ENCODE measurements at regions of chr1 and their contacts with region 1.

Region 1: GRCh38 chr1:220272047-220272840 is at the start of gene RAB3GAP2:
- DNase-seq: peak; percentile 94
- ATAC-seq: peak; percentile 91
- H3K4me3 Mint-ChIP-seq: no peak within 1 kb of the TSS
- H3K27ac Mint-ChIP-seq: no peak within 1 kb of the TSS
- H3K4me1 Mint-ChIP-seq: peaks cover 16% of the 10 kb centered on the region
- H3K27me3 Mint-ChIP-seq: peaks cover 7% of the 10 kb centered on the region
- CTCF ChIP-seq: no peak
- total RNA-seq, gene RAB3GAP2: 93.3 and 107 TPM in 2 replicates

Region 2: GRCh38 chr1:218284934-218285635 is 1987.2 kb before region 1 on chr1 and contains the start of gene RRP15:
- CTCF ChIA-PET with region 1: no interaction called
- POLR2A ChIA-PET with region 1: no interaction called
- intact Hi-C with region 1: loop called (anchors 2 kb)
- DNase-seq: peak; percentile 85
- ATAC-seq: peak; percentile 99
- H3K4me3 Mint-ChIP-seq: peak within 1 kb of the TSS; percentile 96
- H3K27ac Mint-ChIP-seq: peak within 1 kb of the TSS; percentile 97
- H3K4me1 Mint-ChIP-seq: peaks cover 30% of the 10 kb centered on the region
- H3K27me3 Mint-ChIP-seq: peaks cover 9% of the 10 kb centered on the region
- CTCF ChIP-seq: no peak
- total RNA-seq, gene RRP15: 26.9 and 27.3 TPM in 2 replicates

Region 3: GRCh38 chr1:219130366-219130935 is 1141.8 kb before region 1 on chr1:
- CTCF ChIA-PET with region 1: no interaction called
- POLR2A ChIA-PET with region 1: no interaction called
- intact Hi-C with region 1: no loop called
- DNase-seq: no peak
- ATAC-seq: no peak
- H3K4me3 Mint-ChIP-seq: no peak overlapping the region
- H3K27ac Mint-ChIP-seq: no peak overlapping the region
- H3K4me1 Mint-ChIP-seq: no peaks in the 10 kb centered on the region
- H3K27me3 Mint-ChIP-seq: no peaks in the 10 kb centered on the region
- CTCF ChIP-seq: no peak

Region 4: DNA sequence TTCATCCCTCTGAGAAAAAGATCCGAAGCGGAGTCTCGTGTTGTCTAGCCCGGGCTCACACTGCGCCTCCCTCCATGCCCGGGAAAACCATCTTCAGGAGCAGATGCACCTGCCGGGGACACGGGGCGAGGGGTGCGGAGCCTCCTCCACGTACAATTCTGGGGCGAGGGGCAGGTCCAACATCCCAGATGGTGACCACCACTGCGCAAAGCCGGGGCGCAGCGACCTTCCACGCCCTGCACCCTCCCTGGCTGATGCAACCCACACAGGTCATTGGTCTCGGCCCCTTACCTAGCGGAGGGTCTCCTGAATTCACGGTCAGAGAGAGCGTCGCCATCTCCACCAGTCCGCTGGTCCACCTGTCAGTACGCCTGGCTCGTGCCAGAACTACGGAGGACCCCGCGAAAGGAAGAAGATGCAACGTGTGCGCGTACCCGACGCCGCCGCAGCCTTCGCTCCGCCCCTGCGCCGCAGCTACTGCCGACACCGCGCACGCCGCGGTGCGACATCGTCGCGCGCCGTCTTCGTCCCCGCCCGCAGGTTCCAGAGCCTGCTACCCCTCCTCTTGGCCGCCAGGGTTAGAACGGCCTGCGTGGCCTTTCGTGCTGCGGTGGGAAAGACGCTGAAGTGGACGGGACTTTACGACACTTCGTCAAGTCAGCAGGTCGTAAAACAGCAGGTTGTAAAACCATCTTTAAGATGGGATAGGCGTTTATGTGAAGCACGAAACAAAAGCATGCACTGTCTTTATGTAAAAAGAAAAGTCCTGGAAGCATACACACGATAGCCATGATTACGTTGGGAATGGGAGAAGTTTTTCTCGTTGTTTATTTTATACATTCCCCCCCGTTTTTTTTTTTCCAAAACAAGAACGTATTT is 226.0 kb before region 1 on chr1 and contains the start of gene EPRS1:
- CTCF ChIA-PET with region 1: no interaction called
- POLR2A ChIA-PET with region 1: no interaction called
- intact Hi-C with region 1: loop called (anchors 2 kb)
- DNase-seq: peak; percentile 89
- ATAC-seq: peak; percentile 99
- H3K4me3 Mint-ChIP-seq: peak within 1 kb of the TSS; percentile 97
- H3K27ac Mint-ChIP-seq: peak within 1 kb of the TSS; percentile 93
- H3K4me1 Mint-ChIP-seq: peaks cover 26% of the 10 kb centered on the region
- H3K27me3 Mint-ChIP-seq: no peaks in the 10 kb centered on the region
- CTCF ChIP-seq: peak; percentile 21
- total RNA-seq, gene EPRS1: 114 and 119 TPM in 2 replicates

Region 5: GRCh38 chr1:220255204-220255603 is 17.0 kb before region 1 on chr1:
- CTCF ChIA-PET with region 1: no interaction called
- POLR2A ChIA-PET with region 1: interaction called, 8 read pairs
- intact Hi-C with region 1: loop called (anchors 2 kb)
- DNase-seq: no peak
- ATAC-seq: peak; percentile 47
- H3K4me3 Mint-ChIP-seq: peak overlapping the region; percentile 51
- H3K27ac Mint-ChIP-seq: peak overlapping the region; percentile 80
- H3K4me1 Mint-ChIP-seq: peaks cover 77% of the 10 kb centered on the region
- H3K27me3 Mint-ChIP-seq: no peaks in the 10 kb centered on the region
- CTCF ChIP-seq: no peak

Region 6: DNA sequence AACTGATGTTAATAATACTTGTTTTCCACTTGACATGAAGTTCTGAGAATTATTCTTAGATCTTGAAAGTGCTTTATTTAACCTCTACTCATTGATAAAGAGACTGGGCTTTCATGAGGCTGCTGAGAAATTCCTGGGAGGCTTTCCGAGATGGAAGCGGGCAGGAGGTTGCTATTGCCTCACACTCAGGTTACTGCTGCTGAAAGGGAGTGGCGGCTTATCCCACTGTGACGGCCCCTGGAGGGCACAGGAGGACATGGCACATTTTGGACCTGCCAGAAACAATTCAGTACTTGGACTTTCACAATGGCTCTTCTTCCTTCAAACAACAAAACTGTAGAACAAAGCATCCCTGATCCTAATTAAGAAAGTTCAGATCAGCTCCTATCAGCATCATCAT is 239.5 kb after region 1 on chr1:
- CTCF ChIA-PET with region 1: no interaction called
- POLR2A ChIA-PET with region 1: no interaction called
- intact Hi-C with region 1: no loop called
- DNase-seq: no peak
- ATAC-seq: no peak
- H3K4me3 Mint-ChIP-seq: no peak overlapping the region
- H3K27ac Mint-ChIP-seq: no peak overlapping the region
- H3K4me1 Mint-ChIP-seq: no peaks in the 10 kb centered on the region
- H3K27me3 Mint-ChIP-seq: peaks cover 3% of the 10 kb centered on the region
- CTCF ChIP-seq: no peak

Region 7: GRCh38 chr1:220770245-220770918 is 498.1 kb after region 1 on chr1:
- CTCF ChIA-PET with region 1: interaction called, 3 read pairs
- POLR2A ChIA-PET with region 1: no interaction called
- intact Hi-C with region 1: loop called (anchors 1 kb)
- DNase-seq: no peak
- ATAC-seq: peak; percentile 88
- H3K4me3 Mint-ChIP-seq: peak overlapping the region; percentile 82
- H3K27ac Mint-ChIP-seq: peak overlapping the region; percentile 96
- H3K4me1 Mint-ChIP-seq: peaks cover 48% of the 10 kb centered on the region
- H3K27me3 Mint-ChIP-seq: no peaks in the 10 kb centered on the region
- CTCF ChIP-seq: no peak